ENCODE measurements at regions of chr14 and their contacts with region 1.

Region 1: DNA sequence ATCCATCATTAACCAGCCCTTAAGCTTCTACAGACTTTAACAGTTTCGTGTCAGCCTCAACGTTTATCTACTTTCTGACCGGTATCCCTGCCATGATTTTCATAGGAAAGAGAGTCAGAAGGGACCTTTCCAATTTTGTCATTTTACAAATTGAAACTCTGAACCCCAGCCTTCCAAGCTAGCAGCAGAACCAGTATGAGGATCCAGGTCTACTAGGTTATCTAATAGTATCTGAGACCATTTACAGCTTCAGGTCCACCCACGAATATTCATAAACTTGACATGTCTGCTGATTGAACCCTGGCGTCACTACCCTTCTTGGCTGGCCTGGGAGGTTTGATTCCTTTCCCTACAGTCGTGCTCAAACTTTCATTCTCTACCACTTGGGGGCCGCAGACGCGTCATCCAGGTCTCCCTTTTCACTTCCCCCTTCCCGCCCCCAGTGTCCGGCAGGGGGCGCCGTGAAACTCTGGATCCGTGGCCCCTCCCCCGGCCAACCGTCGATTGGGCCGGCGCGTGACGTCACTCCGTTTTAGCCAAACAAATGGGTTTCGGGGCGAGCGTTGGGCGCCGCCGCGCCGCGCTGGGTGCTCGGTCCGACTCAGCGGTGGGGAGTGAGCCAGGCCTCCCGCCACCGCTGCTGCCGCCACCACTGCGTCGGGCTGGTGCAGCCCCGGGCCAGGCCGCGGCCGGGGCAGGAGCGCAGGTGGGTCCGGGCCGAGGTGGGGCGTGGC is at the start of gene FBXO34:
- DNase-seq: peak; percentile 99 to 100 (median 100)
- H3K4me3 ChIP-seq: peak within 1 kb of the TSS; percentile 62
- H3K27ac ChIP-seq: peak within 1 kb of the TSS; percentile 78 to 92
- H3K4me1 ChIP-seq: peaks cover 2% of the 10 kb centered on the region
- H3K27me3 ChIP-seq: no peaks in the 10 kb centered on the region
- CTCF ChIP-seq: peak; percentile 99 to 100 (median 100)
- EP300 ChIP-seq: no peak
- POLR2A ChIP-seq: peak; percentile 93
- total RNA-seq, gene FBXO34: 18.1 to 29.8 (median 24.3) TPM

Region 2: GRCh38 chr14:55285048-55285652 is 14.2 kb after region 1 on chr14:
- intact Hi-C with region 1: no loop called
- DNase-seq: no peak
- H3K4me3 ChIP-seq: no peak overlapping the region
- H3K27ac ChIP-seq: no peak overlapping the region
- H3K4me1 ChIP-seq: peaks cover 5% of the 10 kb centered on the region
- H3K27me3 ChIP-seq: no peaks in the 10 kb centered on the region
- CTCF ChIP-seq: no peak
- EP300 ChIP-seq: no peak
- POLR2A ChIP-seq: no peak

Region 3: DNA sequence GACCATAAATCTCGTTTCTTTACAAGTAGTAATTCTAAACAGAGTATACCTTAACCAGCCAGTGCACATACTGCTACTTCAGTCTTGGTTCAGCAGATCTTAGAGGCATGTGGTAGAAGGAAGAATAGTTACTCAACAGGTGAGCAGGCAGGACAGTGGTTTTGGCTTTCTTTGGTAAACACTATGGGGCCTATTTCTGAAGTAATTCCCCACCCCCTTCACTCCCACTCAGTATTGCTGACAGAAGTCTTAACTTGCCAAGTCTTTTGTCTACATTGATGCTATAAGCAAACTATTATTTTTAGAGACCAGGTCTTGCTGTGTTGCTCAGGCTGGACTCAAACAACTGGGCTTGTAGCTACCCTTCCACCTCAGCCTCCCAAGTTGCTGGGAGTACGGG is 68.8 kb after region 1 on chr14:
- intact Hi-C with region 1: loop called in 1 of 4 experiments (anchors 10 kb)
- DNase-seq: no peak
- H3K4me3 ChIP-seq: no peak overlapping the region
- H3K27ac ChIP-seq: no peak overlapping the region
- H3K4me1 ChIP-seq: peaks cover 5% of the 10 kb centered on the region
- H3K27me3 ChIP-seq: no peaks in the 10 kb centered on the region
- CTCF ChIP-seq: no peak
- EP300 ChIP-seq: no peak
- POLR2A ChIP-seq: no peak

Region 4: GRCh38 chr14:55354500-55354899 is 83.5 kb after region 1 on chr14:
- intact Hi-C with region 1: loop called in 3 of 4 experiments (anchors 5 to 10 kb)
- DNase-seq: peak; percentile 33 to 45 (median 39)
- H3K4me3 ChIP-seq: no peak overlapping the region
- H3K27ac ChIP-seq: no peak overlapping the region
- H3K4me1 ChIP-seq: no peaks in the 10 kb centered on the region
- H3K27me3 ChIP-seq: no peaks in the 10 kb centered on the region
- CTCF ChIP-seq: peak in 2 of 3 donors; percentile 8 to 15
- EP300 ChIP-seq: no peak
- POLR2A ChIP-seq: no peak

Region 5: DNA sequence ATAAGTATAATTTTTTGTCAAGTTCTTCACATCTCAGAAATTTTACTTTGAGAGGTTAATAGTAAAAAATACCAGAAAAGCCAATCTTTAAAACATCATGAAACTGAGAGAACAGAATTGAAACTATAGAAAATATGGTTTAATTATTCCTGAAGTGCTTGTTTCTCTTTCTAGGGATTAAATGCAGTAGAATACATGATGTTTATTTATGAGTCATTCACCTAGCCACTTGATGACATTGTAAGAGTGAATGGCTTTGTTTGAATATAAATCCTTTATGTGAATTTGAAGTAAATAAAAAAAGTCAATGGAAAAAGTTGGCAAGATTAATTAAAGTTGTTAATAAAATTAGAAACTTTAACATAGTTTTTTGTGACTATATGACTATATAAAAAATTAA is 357.4 kb after region 1 on chr14:
- intact Hi-C with region 1: no loop called
- DNase-seq: no peak
- H3K4me3 ChIP-seq: no peak overlapping the region
- H3K27ac ChIP-seq: no peak overlapping the region
- H3K4me1 ChIP-seq: peaks cover 3% of the 10 kb centered on the region
- H3K27me3 ChIP-seq: no peaks in the 10 kb centered on the region
- CTCF ChIP-seq: no peak
- EP300 ChIP-seq: no peak
- POLR2A ChIP-seq: no peak